SK-N-SH (cell line): ENCODE measurements at regions of chr10 and their contacts with region 1.

Region 1: GRCh38 chr10:132654702-132655661 is 117.4 kb downstream of the INPP5A start:
- DNase-seq: peak; percentile 95
- H3K4me3 ChIP-seq: peak overlapping the region in 1 of 2 experiments; percentile 53; a peak in 1 of 4 replicates
- H3K27ac ChIP-seq: no peak overlapping the region
- H3K4me1 ChIP-seq: peaks cover 0 to 31% of the 10 kb centered on the region in 2 experiments; a peak in 1 of 4 replicates
- H3K27me3 ChIP-seq: no peaks in the 10 kb centered on the region
- CTCF ChIP-seq: peak; percentile 97
- EP300 ChIP-seq: no peak
- RAD21 ChIP-seq: peak; percentile 94

Region 2: DNA sequence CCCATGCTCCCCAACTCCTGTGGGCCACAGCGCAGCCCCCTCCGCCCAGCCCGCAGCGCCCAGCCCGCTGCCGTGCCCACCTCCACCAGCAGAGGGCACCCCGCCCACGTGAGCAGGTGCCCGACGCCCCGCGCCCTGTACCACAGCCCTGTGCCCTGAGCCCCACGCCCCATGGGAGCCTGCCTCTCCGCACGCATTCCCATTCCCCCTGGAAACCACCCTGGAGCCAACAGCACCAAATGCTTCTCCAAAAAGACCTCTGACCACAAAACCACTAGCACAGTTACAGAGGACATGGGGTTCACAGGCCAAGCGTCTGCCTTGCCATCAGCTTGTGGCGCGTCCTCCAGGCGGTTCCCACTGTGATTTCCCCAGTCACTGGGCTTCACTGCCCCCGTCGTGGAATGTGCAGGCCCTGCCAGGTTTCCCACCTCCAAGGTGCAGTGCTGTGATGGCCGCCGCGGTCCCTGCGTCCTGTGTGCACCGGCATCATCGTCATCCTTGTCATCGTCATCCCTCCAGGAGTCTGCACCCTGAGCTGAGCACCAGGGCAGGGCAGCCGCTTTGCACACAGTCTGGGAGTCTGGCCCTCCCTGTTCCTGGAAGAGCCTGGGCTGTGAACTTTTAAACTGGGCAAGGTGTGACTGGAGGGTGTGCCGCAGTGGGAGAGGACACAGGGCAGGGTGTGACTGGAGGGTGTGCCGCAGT is 196.2 kb before region 1 on chr10:
- CTCF ChIA-PET with region 1: interaction called, 16 read pairs
- POLR2A ChIA-PET with region 1: no interaction called
- DNase-seq: peak; percentile 95
- H3K4me3 ChIP-seq: no peak overlapping the region; a peak in 1 of 4 replicates
- H3K27ac ChIP-seq: no peak overlapping the region
- H3K4me1 ChIP-seq: peaks cover 0 to under 1% of the 10 kb centered on the region in 2 experiments; a peak in 1 of 4 replicates
- H3K27me3 ChIP-seq: no peaks in the 10 kb centered on the region
- CTCF ChIP-seq: peak; percentile 92
- EP300 ChIP-seq: no peak
- RAD21 ChIP-seq: peak; percentile 90

Region 3: GRCh38 chr10:132571650-132572535 is 83.1 kb before region 1 on chr10:
- CTCF ChIA-PET with region 1: no interaction called
- POLR2A ChIA-PET with region 1: no interaction called
- DNase-seq: peak; percentile 65
- H3K4me3 ChIP-seq: no peak overlapping the region
- H3K27ac ChIP-seq: peak overlapping the region in 1 of 2 experiments; percentile 35; a peak in 2 of 4 replicates
- H3K4me1 ChIP-seq: peaks cover 14 to 27% of the 10 kb centered on the region in 2 experiments; a peak in 3 of 4 replicates
- H3K27me3 ChIP-seq: no peaks in the 10 kb centered on the region
- CTCF ChIP-seq: peak; percentile 14; the same call in 1 of the 2 replicates
- EP300 ChIP-seq: peak in 1 of 2 experiments; percentile 39; a peak in 1 of 4 replicates
- RAD21 ChIP-seq: no peak

Region 4: DNA sequence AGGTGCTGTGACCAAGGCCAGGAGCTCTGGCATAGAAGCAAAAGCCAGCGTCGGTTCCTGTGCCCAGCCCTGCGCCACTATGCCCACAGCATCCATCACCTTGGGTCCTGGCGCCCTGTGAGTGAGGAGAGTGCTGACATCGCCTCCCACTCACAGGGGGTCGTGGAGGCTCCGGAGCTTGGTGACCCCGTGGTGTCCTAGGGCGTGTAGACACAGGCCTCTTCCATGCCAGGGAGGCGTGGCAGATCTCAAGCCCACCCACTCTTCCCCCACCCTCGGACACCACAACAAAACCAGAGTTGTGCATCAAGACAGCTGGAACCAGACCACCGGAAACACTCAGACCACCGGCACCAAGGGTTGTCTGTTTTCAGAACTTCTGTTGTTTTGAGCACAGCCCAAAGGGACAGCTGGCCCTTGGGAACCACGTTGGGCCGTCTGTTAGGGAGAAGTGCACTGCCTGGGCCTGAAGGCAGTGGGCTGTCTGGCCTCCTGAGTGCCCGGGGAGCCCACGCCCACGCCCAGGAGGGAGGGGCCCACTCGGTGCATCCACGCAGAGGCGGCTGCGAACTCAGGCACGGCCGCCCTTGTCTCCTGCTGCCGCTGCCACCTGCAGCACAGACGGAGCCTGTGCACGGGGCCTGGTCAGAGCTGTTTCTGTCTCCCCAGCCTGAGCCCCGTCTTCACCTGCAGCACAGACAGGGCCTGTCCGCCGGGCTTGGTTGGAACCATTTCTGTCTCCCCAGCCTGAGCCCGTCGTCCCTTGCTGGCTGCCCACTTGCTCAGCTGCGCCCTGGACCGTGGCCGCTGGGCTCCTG is 11.1 kb before region 1 on chr10:
- CTCF ChIA-PET with region 1: interaction called, 19 read pairs
- POLR2A ChIA-PET with region 1: no interaction called
- DNase-seq: peak; percentile 72
- H3K4me3 ChIP-seq: no peak overlapping the region
- H3K27ac ChIP-seq: no peak overlapping the region; a peak in 1 of 4 replicates
- H3K4me1 ChIP-seq: peaks cover 0 to 17% of the 10 kb centered on the region in 2 experiments; a peak in 2 of 4 replicates
- H3K27me3 ChIP-seq: no peaks in the 10 kb centered on the region
- CTCF ChIP-seq: no peak
- EP300 ChIP-seq: no peak
- RAD21 ChIP-seq: no peak; the same call in 1 of the 2 replicates

Region 5: DNA sequence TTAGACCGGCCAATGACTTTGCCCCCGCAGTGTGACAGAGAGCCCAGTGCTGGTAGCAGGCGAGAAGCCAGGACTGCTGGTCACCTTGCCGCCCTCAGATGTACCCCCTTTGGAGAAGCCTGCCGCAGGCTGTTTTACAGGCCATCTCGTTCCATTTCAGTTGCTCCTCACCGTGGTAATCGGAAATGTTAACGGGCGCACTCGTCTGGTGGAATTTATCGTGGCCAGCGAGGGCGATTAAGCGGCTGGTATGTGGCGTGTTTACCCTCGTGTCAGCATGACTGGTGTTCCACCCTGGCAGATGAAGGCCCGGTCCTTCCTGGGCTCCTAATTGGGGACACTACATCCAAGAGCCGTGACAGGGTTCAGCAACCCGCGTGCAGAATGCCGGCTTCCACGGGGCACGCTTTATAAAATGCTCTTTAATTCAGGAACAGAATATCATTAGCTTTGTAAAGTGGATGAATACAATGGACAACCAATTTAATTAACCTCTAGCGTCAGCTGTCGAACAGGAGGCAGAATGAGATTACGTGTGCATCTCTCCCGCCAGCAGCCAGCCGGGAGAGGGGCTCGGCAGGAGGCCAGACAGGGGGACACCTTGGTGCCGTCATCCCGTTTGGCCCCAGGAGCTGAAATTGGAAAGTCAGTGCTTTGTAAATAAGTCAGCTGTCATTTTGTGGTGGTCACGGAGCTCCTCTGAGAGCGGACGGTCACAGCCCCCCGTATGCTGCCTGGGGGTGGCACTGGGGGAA is 22.7 kb after region 1 on chr10:
- CTCF ChIA-PET with region 1: interaction called, 14 read pairs
- POLR2A ChIA-PET with region 1: no interaction called
- DNase-seq: no peak
- H3K4me3 ChIP-seq: no peak overlapping the region
- H3K27ac ChIP-seq: no peak overlapping the region
- H3K4me1 ChIP-seq: peaks cover 0 to 11% of the 10 kb centered on the region in 2 experiments; a peak in 1 of 4 replicates
- H3K27me3 ChIP-seq: no peaks in the 10 kb centered on the region
- CTCF ChIP-seq: no peak
- EP300 ChIP-seq: no peak
- RAD21 ChIP-seq: no peak

Region 6: DNA sequence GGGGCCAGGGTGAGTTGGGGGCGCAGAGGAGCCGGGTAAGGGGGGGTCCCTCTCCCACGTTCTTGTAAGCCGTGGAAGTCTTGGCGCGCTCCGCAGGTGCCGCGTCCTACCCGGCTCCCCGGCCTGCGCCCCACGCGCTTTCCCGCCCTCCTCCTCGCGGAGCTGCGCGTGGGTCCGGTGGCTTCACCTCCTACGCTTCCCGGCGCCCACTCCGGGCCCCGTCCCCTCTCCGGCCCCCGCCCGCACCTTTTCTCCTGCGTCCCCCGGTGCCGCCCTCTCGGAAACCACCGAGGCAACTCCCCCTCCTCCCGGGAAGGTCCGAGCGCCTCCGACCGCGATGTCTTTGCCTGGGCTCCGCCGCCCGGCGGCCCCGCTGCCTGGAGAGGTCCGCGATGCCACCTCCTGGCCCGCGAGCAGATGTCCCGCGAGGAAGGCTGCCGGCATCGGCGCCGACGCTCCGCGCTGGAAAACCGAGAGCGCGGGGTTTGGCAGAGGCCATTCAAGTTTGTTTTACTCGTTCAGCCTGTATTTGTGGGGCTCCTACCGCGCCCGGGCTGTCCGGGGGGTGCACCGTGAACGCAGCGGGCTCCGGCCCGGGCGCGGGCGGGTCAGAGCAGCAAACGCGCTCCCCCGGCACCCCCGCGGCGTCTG is 133.3 kb after region 1 on chr10:
- CTCF ChIA-PET with region 1: interaction called, 42 read pairs
- POLR2A ChIA-PET with region 1: no interaction called
- DNase-seq: peak; percentile 76
- H3K4me3 ChIP-seq: no peak overlapping the region
- H3K27ac ChIP-seq: no peak overlapping the region
- H3K4me1 ChIP-seq: no peaks in the 10 kb centered on the region
- H3K27me3 ChIP-seq: peaks cover 52% of the 10 kb centered on the region
- CTCF ChIP-seq: peak; percentile 21
- EP300 ChIP-seq: no peak
- RAD21 ChIP-seq: peak; percentile 16; the same call in 1 of the 2 replicates

Region 7: GRCh38 chr10:132806561-132807003 is 151.6 kb after region 1 on chr10:
- CTCF ChIA-PET with region 1: interaction called, 11 read pairs
- POLR2A ChIA-PET with region 1: no interaction called
- DNase-seq: peak; percentile 37
- H3K4me3 ChIP-seq: no peak overlapping the region
- H3K27ac ChIP-seq: no peak overlapping the region
- H3K4me1 ChIP-seq: peaks cover 0 to 5% of the 10 kb centered on the region in 2 experiments; a peak in 1 of 4 replicates
- H3K27me3 ChIP-seq: no peaks in the 10 kb centered on the region
- CTCF ChIP-seq: no peak
- EP300 ChIP-seq: no peak
- RAD21 ChIP-seq: no peak

Region 8: GRCh38 chr10:132892004-132892403 is 237.0 kb after region 1 on chr10:
- CTCF ChIA-PET with region 1: interaction called, 12 read pairs
- POLR2A ChIA-PET with region 1: no interaction called
- DNase-seq: no peak
- H3K4me3 ChIP-seq: no peak overlapping the region
- H3K27ac ChIP-seq: no peak overlapping the region
- H3K4me1 ChIP-seq: no peaks in the 10 kb centered on the region; a peak in 1 of 4 replicates
- H3K27me3 ChIP-seq: no peaks in the 10 kb centered on the region
- CTCF ChIP-seq: no peak
- EP300 ChIP-seq: no peak
- RAD21 ChIP-seq: no peak